Adrenal gland (tissue), 19 donors: ENCODE measurements at regions of chr3 and their contacts with region 1.

Region 1: DNA sequence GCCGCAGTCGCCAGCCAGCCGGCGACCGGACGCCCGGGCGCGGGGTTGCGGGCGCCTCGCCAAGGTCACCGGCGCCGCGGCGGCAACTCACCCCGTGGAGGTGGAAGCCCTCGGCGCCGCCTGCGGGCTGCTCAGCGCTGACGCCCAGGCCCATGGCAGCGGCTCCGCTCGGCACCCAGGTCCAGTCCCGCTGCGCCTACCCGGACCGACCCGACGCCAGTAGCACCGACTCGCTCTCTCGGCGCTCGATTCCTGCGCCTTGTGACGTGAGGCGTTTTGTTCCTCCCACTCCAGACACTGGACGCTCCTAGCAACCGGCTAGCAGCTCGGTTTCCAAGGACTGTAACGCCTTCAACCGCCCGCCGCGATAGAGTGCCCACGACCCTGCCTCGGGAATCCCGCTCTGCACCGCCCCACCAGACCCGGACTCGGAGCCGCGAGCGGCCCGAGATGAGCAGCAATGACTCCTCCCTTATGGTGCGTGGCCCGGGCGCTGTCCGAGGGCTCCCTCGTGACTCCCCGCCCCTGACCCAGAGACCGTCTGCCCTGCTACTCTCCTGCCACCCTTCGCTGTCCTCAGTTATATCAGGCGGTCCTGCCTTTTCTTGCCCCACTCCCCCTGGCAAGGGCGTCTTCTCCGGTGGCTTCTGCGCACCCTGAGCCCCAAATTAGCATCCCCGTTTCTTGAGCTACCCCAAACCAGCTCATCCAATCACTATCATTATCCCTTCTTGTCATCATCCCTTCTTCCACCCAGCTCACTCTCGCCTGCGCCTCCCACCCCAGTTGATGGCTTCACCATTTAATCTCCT is at the starts of genes GORASP1 and TTC21A:
- DNase-seq: peak; percentile 86 to 95 (median 90)
- H3K4me3 ChIP-seq: peak within 1 kb of the TSS; percentile 75 to 100 (median 90)
- H3K27ac ChIP-seq: peak within 1 kb of the TSS; percentile 14 to 99 (median 93)
- H3K4me1 ChIP-seq: peaks cover 3 to 26% of the 10 kb centered on the region in 2 donors
- H3K27me3 ChIP-seq: no peaks in the 10 kb centered on the region
- CTCF ChIP-seq: peak in 2 of 6 experiments; percentile 3 to 6
- POLR2A ChIP-seq: peak; percentile 68 to 80
- total RNA-seq, gene GORASP1: 24.3 to 66.2 (median 52.7) TPM
- total RNA-seq, gene TTC21A: 1.2 to 12.1 (median 5.2) TPM

Region 2: GRCh38 chr3:39189959-39190269 is 82.3 kb after region 1 on chr3:
- intact Hi-C with region 1: loop called in 1 of 2 experiments (anchors 10 kb)
- DNase-seq: peak; percentile 68 to 89 (median 82)
- H3K4me3 ChIP-seq: no peak overlapping the region
- H3K27ac ChIP-seq: no peak overlapping the region
- H3K4me1 ChIP-seq: no peaks in the 10 kb centered on the region
- H3K27me3 ChIP-seq: no peaks in the 10 kb centered on the region
- CTCF ChIP-seq: peak; percentile 78 to 85 (median 82)
- POLR2A ChIP-seq: no peak

Region 3: GRCh38 chr3:39383045-39383880 is 275.7 kb after region 1 on chr3 and contains the start of gene SLC25A38:
- intact Hi-C with region 1: loop called in 1 of 2 experiments (anchors 10 kb)
- DNase-seq: peak; percentile 75 to 90 (median 82)
- H3K4me3 ChIP-seq: peak within 1 kb of the TSS in 3 of 4 donors; percentile 30 to 74 (median 58)
- H3K27ac ChIP-seq: peak within 1 kb of the TSS; percentile 79 to 98 (median 97)
- H3K4me1 ChIP-seq: peaks cover 14 to 24% of the 10 kb centered on the region in 2 donors
- H3K27me3 ChIP-seq: no peaks in the 10 kb centered on the region
- CTCF ChIP-seq: peak in 5 of 6 experiments; percentile 16 to 49 (median 39)
- POLR2A ChIP-seq: peak; percentile 24 to 64
- total RNA-seq, gene SLC25A38: 34.2 to 67.2 (median 47.3) TPM